ENCODE measurements at regions of chr2 and their contacts with region 1.

Region 1: DNA sequence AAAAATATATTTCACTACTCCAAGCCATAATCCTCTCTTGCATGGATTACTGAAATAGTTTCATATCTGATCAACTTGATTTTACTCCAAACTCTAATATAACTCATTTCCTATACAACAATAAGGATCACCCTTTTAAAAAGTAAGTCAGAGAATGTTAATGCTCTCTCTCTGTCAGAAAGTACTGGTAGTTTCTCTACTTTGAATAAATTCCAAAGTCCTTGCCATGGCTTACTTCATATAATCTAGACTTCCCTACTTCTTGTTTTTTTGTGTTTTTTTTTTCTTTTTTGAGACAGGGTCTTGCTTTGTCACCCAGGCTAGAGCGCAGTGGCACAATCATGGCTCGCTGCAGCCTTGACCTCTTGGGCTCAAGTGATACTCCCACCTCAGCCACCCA is 36.2 kb downstream of the MAP3K2 start:
- DNase-seq: no peak
- H3K4me3 ChIP-seq: no peak overlapping the region
- CTCF ChIP-seq: no peak

Region 2: DNA sequence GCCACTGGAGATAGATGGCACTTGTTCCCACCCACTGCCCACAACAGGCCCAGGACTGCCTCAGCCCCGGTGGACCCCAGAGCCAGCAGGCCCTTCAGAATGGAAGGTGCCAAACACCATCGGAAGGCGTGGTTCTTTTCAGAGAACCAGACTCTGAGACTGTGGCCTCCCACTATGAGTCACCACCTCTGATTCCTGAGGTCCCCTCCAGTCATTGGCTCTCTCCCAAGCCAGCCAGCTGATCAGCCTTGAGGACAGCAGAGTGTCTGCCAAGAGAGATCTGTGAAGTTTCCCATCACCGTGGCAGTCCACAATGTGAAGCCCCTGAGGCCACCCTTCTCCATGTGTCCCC is 46.6 kb after region 1 on chr2:
- in situ Hi-C with region 1: no loop called
- DNase-seq: peak; percentile 81
- H3K4me3 ChIP-seq: no peak overlapping the region
- CTCF ChIP-seq: no peak

Region 3: GRCh38 chr2:127463155-127463991 is 111.8 kb after region 1 on chr2:
- in situ Hi-C with region 1: no loop called
- DNase-seq: peak; percentile 5
- H3K4me3 ChIP-seq: no peak overlapping the region
- CTCF ChIP-seq: no peak

Region 4: DNA sequence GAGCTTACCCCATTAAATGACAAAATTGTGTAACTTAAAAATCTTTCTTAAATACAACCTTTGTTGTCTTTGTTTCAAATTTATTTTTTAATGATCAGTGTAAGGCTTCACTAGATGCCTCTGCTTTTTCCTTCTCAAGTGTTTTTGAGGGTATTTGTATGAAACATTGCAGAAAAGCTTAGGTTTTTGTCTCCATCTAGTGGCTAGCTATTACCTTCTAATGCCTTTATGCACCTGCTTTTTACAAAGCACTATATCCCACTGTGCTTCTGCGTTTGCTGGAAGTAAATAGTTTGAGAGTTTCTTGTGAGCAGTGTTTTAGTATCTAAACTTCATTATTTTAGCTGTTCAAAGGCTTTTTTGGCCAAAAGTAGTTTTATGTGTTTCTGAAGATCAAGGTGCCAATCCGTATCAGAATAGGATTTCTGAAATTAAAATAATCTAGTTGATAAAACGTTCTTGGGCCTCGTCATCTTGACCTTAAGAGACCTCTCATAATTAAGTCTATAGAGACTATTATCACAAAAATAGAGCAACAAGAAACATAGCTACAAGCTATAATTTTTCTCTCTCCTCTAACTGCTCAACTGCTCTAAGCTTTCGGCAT is 127.7 kb after region 1 on chr2:
- in situ Hi-C with region 1: loop called (anchors 5 kb)
- DNase-seq: peak; percentile 68
- H3K4me3 ChIP-seq: no peak overlapping the region
- CTCF ChIP-seq: peak; percentile 64

Measured in astrocyte of the cerebellum (primary cell).